Caco-2 (cell line): ENCODE measurements at regions of chr4 and their contacts with region 1.

Region 1: DNA sequence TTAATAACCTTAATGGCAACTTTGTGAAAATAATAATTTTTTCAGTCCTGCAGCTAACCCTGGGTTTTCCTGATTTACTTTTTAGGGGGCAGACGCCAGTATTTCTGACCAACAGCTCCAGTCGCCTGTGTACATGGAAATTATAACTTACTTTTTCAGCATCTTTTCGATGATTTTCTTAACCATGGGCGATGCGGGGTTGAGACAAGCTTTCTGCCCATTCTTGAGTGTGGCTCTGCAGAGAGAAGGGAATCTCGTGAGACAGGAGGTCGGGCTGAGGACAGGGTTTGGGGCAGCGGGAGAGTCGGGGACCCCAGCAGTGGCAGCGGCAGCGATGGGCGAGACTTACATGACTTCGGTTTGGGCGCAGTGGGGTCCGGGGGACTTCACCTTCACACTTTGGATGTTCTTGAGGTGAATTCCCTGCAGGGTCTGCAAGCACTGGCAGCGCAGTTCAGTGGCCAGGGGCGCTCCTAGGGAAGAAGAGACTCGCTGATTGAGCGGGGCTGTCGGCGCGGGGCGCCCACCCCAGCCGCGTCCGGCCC is 473 bp downstream of the CXCL2 start:
- DNase-seq: no peak
- H3K4me3 ChIP-seq: peak overlapping the region; percentile 41
- H3K4me3 Mint-ChIP-seq: peak overlapping the region; percentile 98
- H3K27ac Mint-ChIP-seq: peak overlapping the region; percentile 97
- H3K4me1 ChIP-seq: peaks cover 26% of the 10 kb centered on the region
- H3K4me1 Mint-ChIP-seq: peaks cover 27% of the 10 kb centered on the region
- H3K27me3 ChIP-seq: no peaks in the 10 kb centered on the region
- H3K27me3 Mint-ChIP-seq: no peaks in the 10 kb centered on the region
- CTCF ChIP-seq: no peak

Region 2: DNA sequence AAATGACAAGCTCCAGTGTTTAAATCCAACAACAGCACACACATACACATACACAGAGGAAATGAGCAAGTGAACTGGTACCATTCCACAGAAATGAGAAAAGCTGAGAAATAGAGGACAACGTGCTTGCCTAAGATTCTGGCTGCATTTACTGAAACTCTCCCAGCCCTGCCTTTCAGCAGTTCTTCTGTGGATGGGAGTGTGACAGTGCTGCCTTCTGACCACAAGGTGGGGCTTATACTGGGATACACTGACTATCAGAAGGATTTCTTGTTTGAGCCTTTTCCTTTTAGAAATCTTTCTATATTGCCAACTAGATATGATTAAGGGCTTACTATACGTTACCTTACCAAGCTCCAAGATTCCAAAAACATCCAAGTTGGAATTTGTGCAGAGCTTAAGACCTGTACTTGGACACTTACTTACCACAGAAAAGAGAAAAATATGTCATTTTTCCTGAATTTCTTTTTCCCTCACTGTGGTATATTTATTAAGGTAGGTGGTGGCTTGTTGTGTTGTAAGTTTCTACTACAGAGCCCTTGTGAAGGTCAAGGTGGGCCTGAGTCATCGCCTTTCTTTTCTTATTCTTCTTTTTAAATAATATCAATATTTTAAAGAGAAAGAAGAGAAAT is 368.9 kb before region 1 on chr4:
- CTCF ChIA-PET with region 1: no interaction called
- POLR2A ChIA-PET with region 1: no interaction called
- intact Hi-C with region 1: loop called (anchors 1 kb)
- DNase-seq: peak; percentile 57 to 63
- H3K4me3 ChIP-seq: no peak overlapping the region
- H3K4me3 Mint-ChIP-seq: no peak overlapping the region
- H3K27ac Mint-ChIP-seq: no peak overlapping the region
- H3K4me1 ChIP-seq: no peaks in the 10 kb centered on the region; the same call in 1 of the 2 replicates
- H3K4me1 Mint-ChIP-seq: no peaks in the 10 kb centered on the region
- H3K27me3 ChIP-seq: no peaks in the 10 kb centered on the region
- H3K27me3 Mint-ChIP-seq: no peaks in the 10 kb centered on the region
- CTCF ChIP-seq: peak; percentile 79 to 84

Region 3: GRCh38 chr4:74005528-74005927 is 93.0 kb before region 1 on chr4:
- CTCF ChIA-PET with region 1: no interaction called
- POLR2A ChIA-PET with region 1: no interaction called
- intact Hi-C with region 1: loop called (anchors 1 kb)
- DNase-seq: peak in 1 of 2 experiments; percentile 68
- H3K4me3 ChIP-seq: no peak overlapping the region
- H3K4me3 Mint-ChIP-seq: peak overlapping the region; percentile 53
- H3K27ac Mint-ChIP-seq: peak overlapping the region; percentile 93
- H3K4me1 ChIP-seq: peaks cover 38% of the 10 kb centered on the region
- H3K4me1 Mint-ChIP-seq: peaks cover 15% of the 10 kb centered on the region
- H3K27me3 ChIP-seq: no peaks in the 10 kb centered on the region
- H3K27me3 Mint-ChIP-seq: no peaks in the 10 kb centered on the region
- CTCF ChIP-seq: no peak

Region 4: GRCh38 chr4:74062953-74063352 is 35.6 kb before region 1 on chr4:
- CTCF ChIA-PET with region 1: no interaction called
- POLR2A ChIA-PET with region 1: interaction called, 3 read pairs
- intact Hi-C with region 1: loop called (anchors 2 kb)
- DNase-seq: no peak
- H3K4me3 ChIP-seq: no peak overlapping the region
- H3K4me3 Mint-ChIP-seq: peak overlapping the region; percentile 8
- H3K27ac Mint-ChIP-seq: no peak overlapping the region
- H3K4me1 ChIP-seq: peaks cover 38% of the 10 kb centered on the region
- H3K4me1 Mint-ChIP-seq: peaks cover 25% of the 10 kb centered on the region
- H3K27me3 ChIP-seq: no peaks in the 10 kb centered on the region
- H3K27me3 Mint-ChIP-seq: no peaks in the 10 kb centered on the region
- CTCF ChIP-seq: no peak

Region 5: GRCh38 chr4:74133786-74134499 is 35.4 kb after region 1 on chr4:
- CTCF ChIA-PET with region 1: interaction called, 8 read pairs
- POLR2A ChIA-PET with region 1: no interaction called
- intact Hi-C with region 1: loop called (anchors 2 kb)
- DNase-seq: peak; percentile 76 to 80
- H3K4me3 ChIP-seq: no peak overlapping the region
- H3K4me3 Mint-ChIP-seq: no peak overlapping the region
- H3K27ac Mint-ChIP-seq: no peak overlapping the region
- H3K4me1 ChIP-seq: no peaks in the 10 kb centered on the region
- H3K4me1 Mint-ChIP-seq: peaks cover 9% of the 10 kb centered on the region
- H3K27me3 ChIP-seq: no peaks in the 10 kb centered on the region
- H3K27me3 Mint-ChIP-seq: no peaks in the 10 kb centered on the region
- CTCF ChIP-seq: peak; percentile 75 to 82

Region 6: GRCh38 chr4:74364652-74365491 is 266.4 kb after region 1 on chr4 and contains the start of gene EREG:
- CTCF ChIA-PET with region 1: no interaction called
- POLR2A ChIA-PET with region 1: no interaction called
- intact Hi-C with region 1: no loop called
- DNase-seq: peak; percentile 73 to 81
- H3K4me3 ChIP-seq: peak within 1 kb of the TSS; percentile 64
- H3K4me3 Mint-ChIP-seq: peak within 1 kb of the TSS; percentile 75
- H3K27ac Mint-ChIP-seq: peak within 1 kb of the TSS; percentile 91
- H3K4me1 ChIP-seq: 0 out of 2 replicates have a peak, but pooled peaks cover 7% of the 10 kb centered on the region
- H3K4me1 Mint-ChIP-seq: peaks cover 14% of the 10 kb centered on the region
- H3K27me3 ChIP-seq: no peaks in the 10 kb centered on the region
- H3K27me3 Mint-ChIP-seq: no peaks in the 10 kb centered on the region
- CTCF ChIP-seq: no peak
- total RNA-seq, gene EREG: 35.5 and 37.0 TPM in 2 replicates